ENCODE measurements at regions of chr19 and their contacts with region 1.

Region 1: GRCh38 chr19:51338563-51339312 is 3.2 kb downstream of the VSIG10L start:
- DNase-seq: peak; percentile 96
- ATAC-seq: peak; percentile 73
- H3K4me3 Mint-ChIP-seq: peak overlapping the region; percentile 76
- H3K27ac Mint-ChIP-seq: peak overlapping the region; percentile 91
- H3K4me1 Mint-ChIP-seq: peaks cover 11% of the 10 kb centered on the region
- H3K27me3 Mint-ChIP-seq: no peaks in the 10 kb centered on the region

Region 2: GRCh38 chr19:51108066-51108804 is 230.5 kb before region 1 on chr19 and contains the start of gene CTU1:
- CTCF ChIA-PET with region 1: no interaction called
- POLR2A ChIA-PET with region 1: no interaction called
- intact Hi-C with region 1: loop called in 1 of 2 experiments (anchors 1 kb)
- DNase-seq: peak; percentile 99
- ATAC-seq: peak; percentile 98
- H3K4me3 Mint-ChIP-seq: peak within 1 kb of the TSS; percentile 92
- H3K27ac Mint-ChIP-seq: peak within 1 kb of the TSS; percentile 91
- H3K4me1 Mint-ChIP-seq: peaks cover 36% of the 10 kb centered on the region
- H3K27me3 Mint-ChIP-seq: no peaks in the 10 kb centered on the region
- total RNA-seq, gene CTU1: 7.2 to 9.1 TPM

Region 3: DNA sequence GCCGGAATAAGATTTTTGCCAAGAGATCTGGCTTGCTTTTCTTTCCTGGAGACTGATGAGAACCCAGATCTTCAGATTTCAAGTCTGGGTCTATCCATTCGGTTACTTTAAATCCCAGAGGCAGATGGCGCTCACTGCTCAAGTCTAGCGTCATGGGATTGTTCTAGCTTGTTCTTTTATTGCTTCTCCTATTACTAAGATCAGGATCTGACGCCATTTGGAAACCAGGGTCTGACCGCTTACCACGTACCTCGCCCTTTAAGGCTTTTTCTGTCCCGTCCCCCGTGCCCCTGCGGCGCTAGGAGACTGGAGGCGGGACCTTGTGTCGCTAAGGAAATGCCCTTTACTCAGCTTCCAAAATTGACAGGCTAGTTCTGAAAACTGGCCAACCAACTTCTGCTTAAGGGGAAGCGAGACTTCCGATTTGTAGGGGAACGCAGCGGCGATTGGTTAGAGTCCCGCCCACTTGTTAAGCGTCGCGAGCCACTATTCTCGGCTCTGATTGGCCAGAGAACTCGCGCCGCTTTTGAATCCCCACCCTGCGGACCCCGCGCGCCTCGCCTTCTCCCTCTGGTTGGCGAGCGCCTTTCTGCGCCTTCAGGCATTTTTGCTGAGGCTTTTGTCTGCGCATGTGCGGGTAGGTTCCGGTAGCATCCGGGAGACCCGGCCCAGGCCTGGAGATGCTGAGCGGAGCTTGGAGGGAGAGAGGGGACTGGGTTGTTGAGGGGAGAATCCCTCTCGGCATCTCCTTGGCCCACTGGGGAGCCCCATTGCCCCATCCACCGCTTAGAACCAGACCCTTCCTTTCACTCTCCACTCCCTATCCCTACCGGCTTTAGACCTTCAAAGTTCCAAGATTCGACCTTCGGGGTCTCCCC is 55.5 kb after region 1 on chr19:
- CTCF ChIA-PET with region 1: interaction called, 26 read pairs
- POLR2A ChIA-PET with region 1: interaction called, 11 read pairs
- intact Hi-C with region 1: loop called (anchors 1 kb)
- DNase-seq: peak; percentile 99
- ATAC-seq: peak; percentile 88
- H3K4me3 Mint-ChIP-seq: peak overlapping the region; percentile 91
- H3K27ac Mint-ChIP-seq: peak overlapping the region; percentile 96
- H3K4me1 Mint-ChIP-seq: peaks cover 44% of the 10 kb centered on the region
- H3K27me3 Mint-ChIP-seq: no peaks in the 10 kb centered on the region

Region 4: DNA sequence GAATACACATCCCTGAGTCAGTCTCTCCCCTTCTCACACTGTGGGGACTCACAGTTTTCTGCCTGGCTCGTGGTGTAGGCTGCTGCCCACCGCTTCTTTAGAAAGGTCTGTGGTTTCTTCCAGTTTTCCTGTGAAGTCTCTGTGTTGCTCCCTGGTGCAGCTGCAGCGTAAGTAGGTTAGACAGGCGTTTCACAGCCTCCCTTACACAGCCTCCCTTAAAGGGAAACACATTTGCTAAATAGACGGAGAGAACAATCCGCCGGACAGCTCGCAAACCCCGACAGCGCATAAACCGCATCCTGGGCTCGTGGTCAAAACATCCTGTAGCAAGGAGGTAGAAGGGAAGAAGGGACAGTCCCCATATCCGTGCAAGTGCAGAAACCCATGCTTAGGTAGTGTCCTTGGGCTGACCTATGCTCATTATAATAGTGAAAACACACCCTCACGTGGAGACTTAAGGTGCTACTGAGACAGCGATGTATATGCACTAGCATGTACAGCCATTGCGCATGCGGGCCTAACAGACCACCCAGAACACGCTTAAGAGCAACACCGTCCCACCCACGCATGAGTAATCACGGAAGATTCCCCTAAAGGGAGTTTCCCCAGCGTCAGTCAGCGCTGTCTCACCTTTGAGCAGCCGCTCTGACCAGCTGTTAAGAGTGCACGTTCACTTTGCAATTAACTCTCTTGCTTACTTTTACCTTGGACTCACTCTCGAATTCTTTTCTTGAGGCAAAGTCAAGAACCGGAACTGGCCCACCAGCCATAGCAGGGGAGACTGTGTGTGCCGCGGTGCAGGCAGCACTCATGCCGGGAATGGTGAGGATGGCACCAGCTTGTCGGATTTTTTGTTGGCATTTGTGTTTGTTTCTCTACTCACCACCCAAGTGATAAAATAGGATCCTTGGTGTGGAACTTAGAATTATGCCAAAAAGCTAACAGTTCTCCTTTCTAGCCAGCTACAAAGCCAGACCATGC is 103.0 kb after region 1 on chr19:
- CTCF ChIA-PET with region 1: interaction called, 3 read pairs
- POLR2A ChIA-PET with region 1: interaction called, 3 read pairs
- intact Hi-C with region 1: loop called (anchors 1 kb)
- DNase-seq: peak; percentile 96
- ATAC-seq: peak; percentile 91
- H3K4me3 Mint-ChIP-seq: peak overlapping the region; percentile 72
- H3K27ac Mint-ChIP-seq: peak overlapping the region; percentile 95
- H3K4me1 Mint-ChIP-seq: peaks cover 67% of the 10 kb centered on the region
- H3K27me3 Mint-ChIP-seq: no peaks in the 10 kb centered on the region

Region 5: GRCh38 chr19:51593969-51594773 is 255.4 kb after region 1 on chr19:
- CTCF ChIA-PET with region 1: no interaction called
- POLR2A ChIA-PET with region 1: no interaction called
- intact Hi-C with region 1: loop called in 1 of 2 experiments (anchors 1 kb)
- DNase-seq: peak; percentile 99
- ATAC-seq: peak; percentile 100
- H3K4me3 Mint-ChIP-seq: peak overlapping the region; percentile 84
- H3K27ac Mint-ChIP-seq: peak overlapping the region; percentile 81
- H3K4me1 Mint-ChIP-seq: peaks cover 18% of the 10 kb centered on the region
- H3K27me3 Mint-ChIP-seq: peaks cover 5% of the 10 kb centered on the region

Region 6: DNA sequence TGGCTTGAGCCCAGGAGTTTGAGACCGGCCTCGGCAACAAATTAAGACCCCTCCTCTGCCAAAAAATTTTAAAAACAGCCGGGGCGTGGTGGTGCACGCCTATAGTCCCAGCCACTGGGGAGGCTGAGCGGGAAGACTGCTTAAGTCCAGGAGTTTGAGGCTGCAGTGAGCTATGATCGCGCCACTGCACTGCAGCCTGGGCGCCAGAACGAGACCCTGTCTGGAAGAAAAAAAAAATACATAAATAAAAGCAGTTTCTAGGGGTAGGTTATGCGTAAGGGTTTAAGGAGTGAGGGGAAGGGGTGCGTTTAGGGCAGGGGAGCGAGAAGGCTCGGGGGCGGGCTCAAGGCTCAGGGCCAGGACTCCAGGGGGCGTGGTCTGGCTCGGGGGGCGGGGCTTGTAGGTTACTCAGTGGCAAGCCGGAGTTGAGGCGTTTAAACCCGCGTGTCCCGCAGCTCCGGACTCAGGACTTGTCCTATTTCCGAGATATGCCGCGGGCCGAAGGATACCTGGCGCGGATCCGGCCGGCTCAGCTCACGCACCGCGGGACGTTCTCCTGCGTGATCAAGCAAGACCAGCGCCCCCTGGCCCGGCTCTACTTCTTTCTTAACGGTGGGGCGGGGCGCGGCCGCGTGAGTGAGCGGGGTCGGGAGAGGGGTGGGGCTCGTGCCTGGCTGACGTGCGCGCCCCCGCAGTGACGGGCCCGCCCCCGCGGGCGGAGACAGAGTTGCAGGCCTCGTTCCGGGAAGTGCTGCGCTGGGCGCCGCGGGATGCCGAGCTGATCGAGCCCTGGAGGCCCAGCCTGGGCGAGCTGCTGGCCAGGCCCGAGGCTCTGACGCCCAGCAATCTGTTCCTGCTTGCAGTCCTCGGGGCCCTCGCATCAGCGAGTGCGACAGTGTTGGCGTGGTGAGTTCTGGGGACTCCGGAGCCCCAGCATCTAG is 365.1 kb after region 1 on chr19:
- CTCF ChIA-PET with region 1: no interaction called
- POLR2A ChIA-PET with region 1: no interaction called
- intact Hi-C with region 1: loop called in 1 of 2 experiments (anchors 1 kb)
- DNase-seq: peak; percentile 98
- ATAC-seq: peak; percentile 88
- H3K4me3 Mint-ChIP-seq: peak overlapping the region; percentile 94
- H3K27ac Mint-ChIP-seq: peak overlapping the region; percentile 95
- H3K4me1 Mint-ChIP-seq: peaks cover 33% of the 10 kb centered on the region
- H3K27me3 Mint-ChIP-seq: peaks cover 5% of the 10 kb centered on the region